ENCODE measurements at regions of chr2 and their contacts with region 1.

Region 1: DNA sequence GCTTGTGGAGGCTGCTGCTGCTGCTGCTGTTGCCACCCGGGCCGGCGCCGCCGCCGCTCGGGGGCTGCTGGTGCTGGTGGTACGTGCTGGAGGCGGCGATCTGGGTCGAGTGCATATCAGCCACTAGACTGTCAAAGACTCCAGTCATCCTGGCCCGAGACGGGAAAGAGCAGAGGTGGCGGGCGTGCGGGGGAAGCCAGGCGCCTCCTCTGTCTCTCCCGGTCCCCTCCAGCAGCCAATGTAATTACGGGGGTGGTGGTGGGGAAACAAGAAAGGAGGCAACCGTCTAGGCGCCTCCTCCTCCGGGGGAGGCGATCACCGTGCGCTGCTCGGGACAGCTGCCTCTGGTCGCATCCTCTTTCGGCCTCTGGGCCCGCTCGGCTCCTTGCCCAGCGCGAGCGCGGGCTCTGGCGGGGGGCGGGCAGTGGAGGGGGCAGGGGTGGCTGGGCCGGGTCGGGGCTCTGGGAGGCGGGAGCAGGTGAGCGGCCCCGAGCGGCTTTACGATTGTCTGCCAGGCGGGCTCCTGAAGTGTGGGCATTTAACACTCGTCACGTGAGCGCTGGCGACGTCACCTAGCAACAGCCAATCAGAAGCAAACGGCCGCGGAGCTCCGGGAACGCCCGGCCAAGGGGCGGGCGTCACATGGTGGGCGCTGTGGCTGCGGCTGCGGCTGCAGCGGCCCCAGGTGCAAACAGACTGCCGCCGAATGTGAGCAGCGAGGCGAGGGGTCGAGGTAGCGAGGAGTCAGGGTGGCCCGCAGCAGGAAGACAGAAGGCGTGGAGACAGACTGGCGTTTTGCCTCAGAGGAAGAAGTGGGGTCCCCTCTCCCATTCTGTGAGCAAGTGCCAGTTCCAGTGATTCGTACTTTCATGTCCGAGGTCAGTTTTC is at the start of gene DLX2:
- DNase-seq: no peak
- H3K4me3 ChIP-seq: peak within 1 kb of the TSS; percentile 27 to 68 (median 49)
- H3K27ac ChIP-seq: no peak within 1 kb of the TSS
- H3K4me1 ChIP-seq: peaks cover 42 to 81% (median 63%) of the 10 kb centered on the region in 3 donors
- H3K27me3 ChIP-seq: peaks cover 59 to 100% (median 88%) of the 10 kb centered on the region in 4 donors
- CTCF ChIP-seq: no peak
- POLR2A ChIP-seq: no peak
- total RNA-seq, gene DLX2: not detected

Region 2: DNA sequence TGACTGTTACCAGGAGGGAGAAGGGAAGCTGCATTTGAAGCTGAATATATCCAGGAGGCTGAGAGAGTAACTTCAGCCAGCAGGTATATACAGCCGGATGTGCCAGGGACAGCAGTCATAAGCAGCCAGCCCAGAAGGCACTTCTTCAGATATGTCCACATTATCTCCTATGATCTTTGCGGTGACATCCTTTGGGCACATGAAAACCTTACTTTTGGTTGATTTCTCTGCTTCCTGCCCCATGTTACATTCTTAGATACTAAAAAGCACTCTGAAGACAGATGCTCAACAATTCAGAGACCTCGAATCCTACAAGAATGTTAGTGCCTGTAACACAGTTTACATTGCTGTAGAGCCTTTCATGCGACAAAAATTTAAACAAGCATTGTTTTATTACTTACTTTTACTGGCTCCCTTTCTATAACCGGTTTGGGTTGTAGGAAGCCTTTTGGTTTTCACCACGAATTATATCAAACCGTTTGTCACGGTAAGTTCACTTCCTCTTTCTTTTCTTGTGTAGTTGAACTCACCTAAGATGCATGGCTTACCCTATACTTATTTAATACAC is 891.7 kb before region 1 on chr2:
- intact Hi-C with region 1: no loop called
- DNase-seq: no peak
- H3K4me3 ChIP-seq: no peak overlapping the region
- H3K27ac ChIP-seq: no peak overlapping the region
- H3K4me1 ChIP-seq: no peaks in the 10 kb centered on the region
- H3K27me3 ChIP-seq: peaks cover 0 to 7% (median 0%) of the 10 kb centered on the region in 4 donors
- CTCF ChIP-seq: no peak
- POLR2A ChIP-seq: no peak

Region 3: GRCh38 chr2:171692331-171692730 is 410.3 kb before region 1 on chr2:
- intact Hi-C with region 1: loop called (anchors 10 kb)
- DNase-seq: no peak
- H3K4me3 ChIP-seq: no peak overlapping the region
- H3K27ac ChIP-seq: no peak overlapping the region
- H3K4me1 ChIP-seq: peaks cover 0 to 29% (median 15%) of the 10 kb centered on the region in 3 donors
- H3K27me3 ChIP-seq: no peaks in the 10 kb centered on the region
- CTCF ChIP-seq: no peak
- POLR2A ChIP-seq: no peak

Region 4: DNA sequence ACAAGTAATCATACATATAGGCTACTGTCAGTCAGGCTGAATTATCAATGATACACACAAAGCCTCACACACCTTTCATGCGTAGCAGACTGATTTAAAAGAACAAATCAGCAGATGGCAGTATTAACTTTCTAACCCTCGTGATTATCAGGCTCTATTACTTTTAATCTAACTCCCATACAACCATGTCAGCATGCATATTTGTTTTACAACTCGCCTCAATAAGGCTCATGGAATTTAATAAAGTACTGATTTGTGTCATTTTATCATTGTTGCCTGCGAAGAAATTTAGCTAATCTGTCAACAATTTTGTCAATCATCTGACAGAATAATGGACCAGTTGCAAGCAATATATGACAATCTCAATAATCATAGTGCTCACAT is 291.4 kb before region 1 on chr2:
- intact Hi-C with region 1: loop called (anchors 10 kb)
- DNase-seq: no peak
- H3K4me3 ChIP-seq: no peak overlapping the region
- H3K27ac ChIP-seq: no peak overlapping the region
- H3K4me1 ChIP-seq: peaks cover 0 to 27% (median 2%) of the 10 kb centered on the region in 3 donors
- H3K27me3 ChIP-seq: no peaks in the 10 kb centered on the region
- CTCF ChIP-seq: peak in 4 of 6 experiments; percentile 19 to 46 (median 34)
- POLR2A ChIP-seq: no peak

Measured in esophagus squamous epithelium (tissue), 5 donors.